ENCODE measurements at regions of chr6 and their contacts with region 1.

Region 1: DNA sequence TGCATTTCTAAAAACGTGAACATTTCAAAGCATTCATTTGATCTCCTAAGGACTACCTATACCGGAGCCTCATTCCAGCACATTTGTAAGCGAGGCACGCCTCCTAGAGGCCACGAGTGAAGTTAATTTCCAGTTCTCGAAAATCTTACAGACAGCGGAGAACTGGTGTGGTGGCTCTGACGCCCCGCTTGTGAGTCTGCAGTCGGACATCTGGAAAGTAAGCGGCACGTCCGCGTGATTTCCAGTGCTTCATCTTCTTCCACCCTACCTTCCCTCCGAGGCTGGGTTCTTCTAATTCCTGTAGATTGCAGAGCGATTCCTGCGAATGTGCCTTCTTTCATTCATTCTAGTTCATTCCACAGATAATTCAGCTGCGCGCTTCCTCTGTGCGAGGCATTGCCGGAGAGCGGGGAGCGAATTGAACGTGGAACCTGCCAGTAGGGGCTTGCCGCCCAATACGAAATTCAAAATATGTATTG is 810 bp upstream of the PRIM2 start:
- DNase-seq: peak; percentile 83

Region 2: GRCh38 chr6:56955171-56956045 is 361.2 kb before region 1 on chr6:
- intact Hi-C with region 1: loop called (anchors 2 kb)
- DNase-seq: peak; percentile 90

Region 3: GRCh38 chr6:57048577-57048976 is 268.0 kb before region 1 on chr6:
- intact Hi-C with region 1: loop called (anchors 5 kb)
- DNase-seq: no peak

Region 4: DNA sequence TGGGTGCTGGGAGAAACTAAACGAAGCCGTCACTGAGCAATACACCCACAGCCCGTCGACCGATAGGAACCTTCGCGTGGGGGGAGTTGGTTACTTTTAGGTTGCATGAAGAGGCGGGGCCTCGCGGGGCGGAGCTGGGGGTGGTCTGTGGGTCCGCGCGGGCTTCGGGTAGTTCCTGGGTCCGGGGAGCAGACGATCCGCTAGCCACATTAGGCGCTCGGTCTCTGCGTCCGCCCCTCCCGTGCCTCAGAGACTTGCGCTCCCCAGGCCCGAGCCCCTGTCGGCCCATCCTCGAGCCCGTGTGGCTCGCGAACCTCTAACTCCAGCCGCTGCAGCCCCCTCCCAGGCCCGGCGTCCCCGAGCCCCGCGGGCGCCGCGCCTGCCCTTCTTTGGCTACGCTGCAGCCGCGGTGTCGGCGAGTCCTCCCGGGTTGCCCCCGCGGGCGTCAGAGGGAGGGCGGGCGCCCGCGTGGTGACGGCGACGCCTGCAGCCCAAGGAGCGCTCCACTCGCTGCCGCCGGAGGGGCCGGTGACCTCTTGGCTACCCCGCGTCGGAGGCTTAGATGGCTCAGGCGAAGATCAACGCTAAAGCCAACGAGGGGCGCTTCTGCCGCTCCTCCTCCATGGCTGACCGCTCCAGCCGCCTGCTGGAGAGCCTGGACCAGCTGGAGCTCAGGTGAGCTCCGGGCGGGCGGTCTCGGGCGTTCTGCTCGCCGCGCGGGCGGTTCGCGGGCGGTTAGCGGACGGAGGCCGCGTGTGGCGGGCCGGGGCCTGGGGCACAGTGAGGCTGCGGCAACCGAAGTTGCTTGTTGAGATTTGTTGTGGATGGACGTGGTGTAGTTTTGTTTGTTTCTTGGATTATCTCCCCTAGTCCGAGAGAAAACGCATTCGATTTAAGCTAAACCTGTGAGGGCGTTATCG is 144.2 kb before region 1 on chr6 and contains the start of gene BAG2:
- intact Hi-C with region 1: loop called (anchors 2 kb)
- DNase-seq: peak; percentile 94
- total RNA-seq, gene BAG2: 16.9 TPM

Region 5: GRCh38 chr6:57190140-57190539 is 126.5 kb before region 1 on chr6:
- intact Hi-C with region 1: loop called (anchors 5 kb)
- DNase-seq: no peak

Region 6: GRCh38 chr6:57216235-57217101 is 100.2 kb before region 1 on chr6:
- intact Hi-C with region 1: loop called (anchors 5 kb)
- DNase-seq: no peak

Region 7: GRCh38 chr6:57252975-57253374 is 63.6 kb before region 1 on chr6:
- intact Hi-C with region 1: no loop called
- DNase-seq: no peak

Region 8: GRCh38 chr6:57267586-57268293 is 48.9 kb before region 1 on chr6:
- intact Hi-C with region 1: loop called (anchors 5 kb)
- DNase-seq: no peak